Ovary (tissue), 10 donors: ENCODE measurements at regions of chr11 and their contacts with region 1.

Region 1: GRCh38 chr11:122101625-122102291 is 14.3 kb downstream of the BLID start:
- DNase-seq: peak; percentile 75 to 82 (median 77)
- H3K4me3 ChIP-seq: peak overlapping the region; percentile 58
- H3K27ac ChIP-seq: peak overlapping the region; percentile 30 to 93
- H3K4me1 ChIP-seq: no peaks in the 10 kb centered on the region
- H3K27me3 ChIP-seq: no peaks in the 10 kb centered on the region
- CTCF ChIP-seq: peak; percentile 55 to 66 (median 57)
- EP300 ChIP-seq: no peak
- POLR2A ChIP-seq: no peak

Region 2: GRCh38 chr11:121722431-121723245 is 379.1 kb before region 1 on chr11:
- intact Hi-C with region 1: loop called in 3 of 4 experiments (anchors 5 to 10 kb)
- DNase-seq: peak; percentile 90 to 94 (median 93)
- H3K4me3 ChIP-seq: peak overlapping the region; percentile 40
- H3K27ac ChIP-seq: peak overlapping the region; percentile 69 to 97
- H3K4me1 ChIP-seq: peaks cover 2% of the 10 kb centered on the region
- H3K27me3 ChIP-seq: no peaks in the 10 kb centered on the region
- CTCF ChIP-seq: peak in 2 of 3 donors; percentile 24 to 35
- EP300 ChIP-seq: peak; percentile 79
- POLR2A ChIP-seq: peak; percentile 75

Region 3: GRCh38 chr11:121741761-121742361 is 359.9 kb before region 1 on chr11:
- intact Hi-C with region 1: loop called in 1 of 4 experiments (anchors 5 kb)
- DNase-seq: peak; percentile 77 to 89 (median 88)
- H3K4me3 ChIP-seq: peak overlapping the region; percentile 12
- H3K27ac ChIP-seq: peak overlapping the region; percentile 24 to 86
- H3K4me1 ChIP-seq: peaks cover 7% of the 10 kb centered on the region
- H3K27me3 ChIP-seq: no peaks in the 10 kb centered on the region
- CTCF ChIP-seq: no peak
- EP300 ChIP-seq: peak; percentile 86
- POLR2A ChIP-seq: peak; percentile 34

Region 4: DNA sequence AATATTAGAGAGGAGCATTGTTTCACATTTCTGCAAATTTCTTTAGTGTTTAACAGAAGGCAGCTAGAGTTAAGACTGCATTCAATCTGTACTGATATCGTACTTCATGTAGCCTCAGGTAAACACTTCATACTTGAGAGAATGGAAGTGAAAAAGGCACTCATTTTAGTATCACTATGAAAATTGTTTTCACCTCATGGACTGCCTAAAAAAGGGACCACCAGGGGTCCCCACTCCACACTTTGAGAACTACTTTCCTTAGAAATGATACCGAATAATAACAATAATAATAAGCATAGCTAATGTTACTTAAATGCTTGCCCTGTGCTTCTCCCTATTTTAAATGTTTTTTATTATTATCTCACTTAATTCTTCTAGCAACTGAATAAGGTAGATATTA is 80.9 kb before region 1 on chr11:
- intact Hi-C with region 1: loop called in 1 of 4 experiments (anchors 10 kb)
- DNase-seq: peak in 1 of 5 donors; percentile 29
- H3K4me3 ChIP-seq: no peak overlapping the region
- H3K27ac ChIP-seq: no peak overlapping the region
- H3K4me1 ChIP-seq: no peaks in the 10 kb centered on the region
- H3K27me3 ChIP-seq: no peaks in the 10 kb centered on the region
- CTCF ChIP-seq: peak in 1 of 3 donors; percentile 11
- EP300 ChIP-seq: no peak
- POLR2A ChIP-seq: no peak

Region 5: DNA sequence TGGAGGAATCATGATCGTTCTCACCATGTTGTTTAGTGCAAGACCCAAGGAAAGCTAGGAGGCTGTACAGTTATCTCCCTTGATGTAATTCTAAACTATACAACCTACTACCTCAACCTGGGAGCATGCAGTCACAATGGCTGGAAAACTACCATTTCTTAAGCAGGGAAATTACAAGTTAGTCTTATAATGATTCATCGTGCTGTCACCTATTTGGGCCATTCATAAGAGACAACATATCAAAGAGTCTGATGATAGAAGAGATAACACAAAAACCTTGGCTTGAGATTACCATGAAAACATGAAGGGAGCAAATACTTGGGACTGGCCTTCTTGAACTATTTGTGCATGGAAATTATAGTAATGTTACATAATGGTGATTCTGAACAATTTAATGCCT is 44.7 kb after region 1 on chr11:
- intact Hi-C with region 1: no loop called
- DNase-seq: no peak
- H3K4me3 ChIP-seq: no peak overlapping the region
- H3K27ac ChIP-seq: no peak overlapping the region
- H3K4me1 ChIP-seq: peaks cover 2% of the 10 kb centered on the region
- H3K27me3 ChIP-seq: no peaks in the 10 kb centered on the region
- CTCF ChIP-seq: no peak
- EP300 ChIP-seq: no peak
- POLR2A ChIP-seq: no peak

Region 6: DNA sequence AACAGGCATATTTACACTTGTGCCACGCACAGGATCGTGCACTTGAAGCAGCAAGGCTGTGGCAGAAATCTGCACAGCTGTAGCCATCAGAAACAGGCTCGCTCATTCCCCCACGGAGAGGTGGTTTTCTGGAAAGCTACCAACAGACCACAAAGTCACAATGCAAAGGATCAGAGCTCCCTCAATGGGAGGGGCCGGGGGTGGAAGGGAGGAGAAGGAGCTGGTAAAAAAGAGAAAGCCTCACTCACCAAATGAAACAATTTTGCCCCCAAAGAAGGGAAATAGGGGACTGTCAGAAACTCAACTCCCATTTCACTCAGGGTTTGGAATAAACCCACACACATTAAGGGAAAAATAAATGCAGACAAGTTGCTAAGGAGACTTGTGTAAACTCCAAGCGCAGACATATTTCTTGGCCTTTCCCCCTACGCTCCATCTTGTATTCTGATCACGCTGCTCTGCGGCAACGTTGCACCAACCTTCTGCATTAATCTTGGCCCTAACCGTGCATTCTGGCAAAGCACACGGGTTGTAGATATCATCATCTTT is 57.5 kb after region 1 on chr11:
- intact Hi-C with region 1: loop called in 1 of 4 experiments (anchors 5 kb)
- DNase-seq: peak; percentile 43 to 56 (median 52)
- H3K4me3 ChIP-seq: peak overlapping the region; percentile 3
- H3K27ac ChIP-seq: peak overlapping the region; percentile 66 to 87
- H3K4me1 ChIP-seq: peaks cover 16% of the 10 kb centered on the region
- H3K27me3 ChIP-seq: no peaks in the 10 kb centered on the region
- CTCF ChIP-seq: no peak
- EP300 ChIP-seq: no peak
- POLR2A ChIP-seq: no peak